Activated CD8-positive, alpha-beta T cell treated with anti-CD3 and anti-CD28 coated beads for 36 hours (primary cell): ENCODE measurements at regions of chr6 and their contacts with region 1.

Region 1: GRCh38 chr6:85449818-85450759 is at the start of gene NT5E:
- DNase-seq: peak; percentile 78
- ATAC-seq: peak; percentile 59
- H3K4me3 Mint-ChIP-seq: peak within 1 kb of the TSS; percentile 91
- H3K27ac Mint-ChIP-seq: peak within 1 kb of the TSS; percentile 96
- H3K4me1 Mint-ChIP-seq: peaks cover 54% of the 10 kb centered on the region
- H3K27me3 Mint-ChIP-seq: no peaks in the 10 kb centered on the region
- CTCF ChIP-seq: no peak
- total RNA-seq, gene NT5E: 5.2 to 6.7 TPM

Region 2: DNA sequence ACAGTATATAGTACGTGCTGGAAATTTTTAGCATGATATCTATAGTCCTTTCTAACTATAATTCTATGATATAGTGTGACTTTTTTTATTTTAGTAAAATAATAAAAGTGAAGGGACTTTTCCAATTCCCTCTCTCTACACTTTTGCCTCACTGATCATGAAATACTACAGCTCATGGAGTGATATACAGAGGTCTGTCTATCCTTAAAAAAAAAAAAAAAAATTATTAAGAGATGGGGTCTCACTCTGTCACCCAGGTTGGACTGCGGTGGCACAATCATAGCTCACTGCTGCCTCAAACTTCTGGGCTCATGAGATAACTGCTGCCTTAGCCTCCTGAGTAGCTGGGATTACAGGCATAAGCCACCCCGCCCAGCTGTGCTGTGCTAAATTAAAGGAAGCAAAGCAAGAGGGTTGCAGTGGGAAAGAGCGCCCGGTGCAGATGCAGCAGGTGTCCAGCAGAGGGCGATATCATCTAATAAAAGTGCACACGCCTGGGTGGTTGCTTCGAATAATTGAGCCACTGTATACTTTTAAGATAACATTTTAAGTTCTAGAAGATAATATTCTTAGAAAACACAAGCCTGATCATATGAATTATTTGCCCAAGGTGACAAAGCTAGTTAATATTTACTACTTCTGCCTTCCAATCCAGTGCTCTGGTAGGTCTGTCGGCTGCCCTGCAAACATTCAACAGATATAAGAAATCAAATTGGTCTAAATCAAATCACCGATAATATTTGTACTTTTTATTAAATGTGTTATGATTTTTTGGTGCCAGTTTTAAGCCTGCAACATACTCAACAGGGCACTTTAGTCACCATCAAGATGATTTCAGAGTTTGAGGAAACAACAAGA is 95.1 kb before region 1 on chr6:
- CTCF ChIA-PET with region 1: interaction called, 20 read pairs
- POLR2A ChIA-PET with region 1: interaction called, 3 read pairs
- intact Hi-C with region 1: no loop called
- DNase-seq: peak; percentile 79
- ATAC-seq: peak; percentile 89
- H3K4me3 Mint-ChIP-seq: no peak overlapping the region
- H3K27ac Mint-ChIP-seq: no peak overlapping the region
- H3K4me1 Mint-ChIP-seq: no peaks in the 10 kb centered on the region
- H3K27me3 Mint-ChIP-seq: peaks cover 2% of the 10 kb centered on the region
- CTCF ChIP-seq: peak; percentile 91

Region 3: GRCh38 chr6:85360794-85361642 is 89.1 kb before region 1 on chr6:
- CTCF ChIA-PET with region 1: interaction called, 20 read pairs
- POLR2A ChIA-PET with region 1: interaction called, 4 read pairs
- intact Hi-C with region 1: no loop called
- DNase-seq: peak; percentile 8
- ATAC-seq: peak; percentile 63
- H3K4me3 Mint-ChIP-seq: no peak overlapping the region
- H3K27ac Mint-ChIP-seq: no peak overlapping the region
- H3K4me1 Mint-ChIP-seq: peaks cover 14% of the 10 kb centered on the region
- H3K27me3 Mint-ChIP-seq: no peaks in the 10 kb centered on the region
- CTCF ChIP-seq: no peak

Region 4: DNA sequence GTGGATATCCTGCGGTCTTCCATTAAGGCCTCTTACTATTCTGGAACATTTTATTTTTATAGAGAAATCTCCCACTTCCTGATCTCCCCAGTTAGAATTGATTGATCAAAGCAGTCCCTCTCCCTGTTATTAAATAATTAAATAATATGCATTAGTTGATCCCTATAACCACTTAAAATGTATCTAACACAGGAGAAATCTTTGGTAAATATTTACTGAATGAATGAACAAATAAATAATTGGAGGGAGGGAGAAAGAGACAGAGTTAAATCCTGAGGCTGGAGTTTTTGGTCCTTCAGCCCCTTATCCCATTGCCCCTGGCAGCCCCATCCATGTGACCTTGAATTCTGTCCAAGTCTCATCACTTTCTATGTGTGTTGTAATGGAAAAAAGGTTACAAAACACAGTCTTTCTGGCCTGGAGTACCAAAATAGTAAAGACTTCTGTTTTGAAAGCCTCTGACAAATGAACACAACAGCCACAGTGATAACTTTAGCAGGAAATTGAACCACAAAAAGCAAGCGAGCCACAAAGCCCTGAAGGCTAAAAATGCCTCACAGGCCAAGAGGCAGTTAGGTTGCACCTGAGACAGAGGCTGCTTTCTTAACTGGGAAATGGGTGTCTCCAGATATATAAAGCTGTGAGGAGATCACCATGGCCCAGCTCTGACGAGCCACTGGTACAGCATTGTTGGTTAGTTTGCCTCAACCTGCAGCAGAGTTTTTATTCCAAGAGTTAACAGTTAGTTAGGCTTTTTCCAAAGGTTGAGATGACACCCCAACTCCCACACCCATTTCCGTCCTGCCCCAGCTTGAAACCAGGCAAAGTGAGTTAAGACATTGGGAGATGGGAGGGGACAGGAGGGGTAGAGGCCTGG is 11.1 kb after region 1 on chr6:
- CTCF ChIA-PET with region 1: interaction called, 65 read pairs
- POLR2A ChIA-PET with region 1: interaction called, 89 read pairs
- intact Hi-C with region 1: no loop called
- DNase-seq: peak; percentile 82
- ATAC-seq: peak; percentile 55
- H3K4me3 Mint-ChIP-seq: peak overlapping the region; percentile 51
- H3K27ac Mint-ChIP-seq: peak overlapping the region; percentile 97
- H3K4me1 Mint-ChIP-seq: peaks cover 97% of the 10 kb centered on the region
- H3K27me3 Mint-ChIP-seq: no peaks in the 10 kb centered on the region
- CTCF ChIP-seq: no peak

Region 5: DNA sequence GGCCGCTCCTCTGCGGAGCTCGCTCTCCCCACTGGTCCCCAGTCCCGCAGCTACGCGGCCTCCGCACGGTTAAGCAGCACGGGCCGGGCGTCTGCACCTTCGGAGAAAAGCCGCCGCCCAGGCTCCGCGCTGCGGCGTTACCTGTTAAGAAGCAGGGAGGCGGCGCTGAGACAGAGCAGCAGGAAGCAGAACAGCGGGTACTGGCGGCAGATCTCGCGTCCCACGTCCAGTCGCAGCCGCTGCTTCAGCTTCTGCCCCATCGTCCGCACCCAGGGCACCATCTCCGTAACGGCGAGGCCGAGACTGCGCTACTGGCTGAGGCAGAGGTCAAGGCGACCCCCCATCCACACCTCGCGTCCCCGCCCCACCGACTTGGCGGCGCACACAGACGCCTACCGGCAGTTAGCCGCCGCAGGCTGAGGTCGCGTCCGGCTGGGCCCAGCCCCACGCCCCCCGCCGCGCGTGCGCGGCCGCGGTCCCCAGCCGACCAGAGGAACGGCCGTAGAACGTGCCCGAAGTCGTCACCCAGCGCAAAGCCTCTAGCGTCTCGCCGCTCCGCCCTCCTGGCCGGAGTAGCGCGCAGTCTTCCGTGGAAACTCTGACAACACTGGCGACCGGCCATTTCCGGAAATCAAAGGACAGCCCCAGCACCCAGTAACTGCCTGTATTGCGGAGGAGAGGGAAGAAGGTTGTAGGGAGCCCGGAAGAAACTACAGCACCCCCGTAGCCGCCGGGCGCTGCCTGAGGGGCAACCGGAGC is 143.5 kb after region 1 on chr6 and contains the start of gene SNX14:
- CTCF ChIA-PET with region 1: no interaction called
- POLR2A ChIA-PET with region 1: interaction called, 4 read pairs
- intact Hi-C with region 1: loop called (anchors 10 kb)
- DNase-seq: peak; percentile 88
- ATAC-seq: peak; percentile 84
- H3K4me3 Mint-ChIP-seq: peak within 1 kb of the TSS; percentile 99
- H3K27ac Mint-ChIP-seq: peak within 1 kb of the TSS; percentile 97
- H3K4me1 Mint-ChIP-seq: peaks cover 43% of the 10 kb centered on the region
- H3K27me3 Mint-ChIP-seq: no peaks in the 10 kb centered on the region
- CTCF ChIP-seq: no peak
- total RNA-seq, gene SNX14: 53.9 to 54.1 TPM

Region 6: DNA sequence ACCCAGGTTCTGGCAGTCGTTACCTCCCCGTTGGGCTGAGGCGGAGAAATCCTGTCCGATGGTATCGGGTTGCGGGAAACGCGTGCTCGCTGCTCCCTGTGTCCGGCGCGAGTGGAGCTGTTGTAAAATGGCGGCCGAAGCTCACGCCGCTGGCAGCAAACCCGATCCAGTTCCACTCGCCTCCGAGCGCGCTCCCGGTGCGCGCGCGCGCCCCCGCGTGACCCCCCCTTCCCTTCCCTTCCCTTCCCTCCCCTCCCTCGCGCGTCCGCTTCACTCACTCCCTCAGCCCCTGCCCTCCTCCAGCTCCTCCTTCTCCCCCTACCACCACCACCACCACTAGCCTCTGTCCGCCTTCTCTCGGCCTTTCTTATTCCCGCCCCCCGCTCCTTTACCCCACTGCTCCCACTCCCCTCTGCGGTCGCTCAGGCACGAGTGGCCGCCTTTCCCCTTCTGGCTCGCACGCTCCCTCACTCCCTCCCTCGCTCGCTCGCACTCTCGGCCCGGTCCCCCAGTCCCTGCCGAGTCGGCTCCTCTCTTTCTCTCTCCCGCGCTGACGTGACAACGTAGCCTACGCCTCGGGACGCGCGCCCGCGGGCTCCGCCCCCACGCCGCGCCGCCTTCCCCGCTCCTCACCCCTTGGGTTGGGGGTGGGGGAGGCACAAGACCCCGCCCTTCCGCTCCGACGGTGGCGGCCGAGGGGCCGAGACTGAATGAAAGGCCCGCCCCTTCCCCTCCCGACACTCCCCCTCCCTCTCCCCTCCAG is 192.9 kb after region 1 on chr6 and contains the start of gene SYNCRIP:
- CTCF ChIA-PET with region 1: interaction called, 3 read pairs
- POLR2A ChIA-PET with region 1: interaction called, 11 read pairs
- intact Hi-C with region 1: no loop called
- DNase-seq: peak; percentile 97
- ATAC-seq: peak; percentile 88
- H3K4me3 Mint-ChIP-seq: peak within 1 kb of the TSS; percentile 96
- H3K27ac Mint-ChIP-seq: peak within 1 kb of the TSS; percentile 99
- H3K4me1 Mint-ChIP-seq: peaks cover 36% of the 10 kb centered on the region
- H3K27me3 Mint-ChIP-seq: no peaks in the 10 kb centered on the region
- CTCF ChIP-seq: no peak
- total RNA-seq, gene SYNCRIP: 167 to 179 TPM